Ovary (tissue), 10 donors: ENCODE measurements at regions of chr20 and their contacts with region 1.

Region 1: DNA sequence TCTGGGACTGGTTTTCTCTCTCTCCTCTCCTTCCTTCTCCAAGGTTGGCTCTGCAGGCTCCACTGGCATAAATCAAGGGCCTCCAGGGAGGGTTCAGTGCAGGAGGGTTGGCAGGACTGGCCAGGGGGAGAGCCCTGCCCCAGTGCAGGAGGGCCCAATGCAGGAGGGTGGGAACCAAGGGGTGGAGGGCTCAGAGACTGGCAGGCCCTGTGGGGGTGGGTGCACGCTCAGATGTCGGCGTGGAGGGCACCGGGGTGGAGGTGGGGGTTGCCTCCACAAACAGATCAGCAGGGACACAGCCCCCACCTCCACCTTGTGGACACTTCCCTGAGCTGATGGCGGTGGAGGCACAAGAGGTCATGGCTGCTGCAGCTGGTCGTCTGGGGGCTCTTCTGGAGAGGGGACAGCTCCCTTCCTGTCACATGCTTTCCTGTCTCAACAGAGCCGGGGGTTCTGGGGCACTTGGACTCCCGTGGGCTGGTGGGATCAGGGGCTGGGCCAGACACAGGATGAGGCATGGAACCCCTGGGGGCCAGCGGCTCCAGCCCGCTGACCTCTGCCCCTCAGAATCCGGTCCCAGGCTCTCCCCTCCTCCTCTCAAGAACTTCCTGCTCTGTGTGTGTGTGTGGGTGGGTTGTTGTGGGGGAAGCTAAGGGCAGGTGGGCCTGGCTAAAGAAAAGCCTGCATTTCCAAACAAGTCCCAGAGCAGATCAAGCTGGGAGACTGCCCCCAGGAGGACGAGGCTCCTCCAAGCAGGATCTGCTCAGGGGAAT is 2.7 kb upstream of the ABHD16B start:
- DNase-seq: peak; percentile 63 to 75 (median 70)
- H3K4me3 ChIP-seq: no peak overlapping the region
- H3K27ac ChIP-seq: peak overlapping the region in 1 of 2 donors; percentile 71
- H3K4me1 ChIP-seq: peaks cover 47% of the 10 kb centered on the region
- H3K27me3 ChIP-seq: no peaks in the 10 kb centered on the region
- CTCF ChIP-seq: peak; percentile 12 to 44 (median 35)
- EP300 ChIP-seq: no peak
- POLR2A ChIP-seq: no peak

Region 2: DNA sequence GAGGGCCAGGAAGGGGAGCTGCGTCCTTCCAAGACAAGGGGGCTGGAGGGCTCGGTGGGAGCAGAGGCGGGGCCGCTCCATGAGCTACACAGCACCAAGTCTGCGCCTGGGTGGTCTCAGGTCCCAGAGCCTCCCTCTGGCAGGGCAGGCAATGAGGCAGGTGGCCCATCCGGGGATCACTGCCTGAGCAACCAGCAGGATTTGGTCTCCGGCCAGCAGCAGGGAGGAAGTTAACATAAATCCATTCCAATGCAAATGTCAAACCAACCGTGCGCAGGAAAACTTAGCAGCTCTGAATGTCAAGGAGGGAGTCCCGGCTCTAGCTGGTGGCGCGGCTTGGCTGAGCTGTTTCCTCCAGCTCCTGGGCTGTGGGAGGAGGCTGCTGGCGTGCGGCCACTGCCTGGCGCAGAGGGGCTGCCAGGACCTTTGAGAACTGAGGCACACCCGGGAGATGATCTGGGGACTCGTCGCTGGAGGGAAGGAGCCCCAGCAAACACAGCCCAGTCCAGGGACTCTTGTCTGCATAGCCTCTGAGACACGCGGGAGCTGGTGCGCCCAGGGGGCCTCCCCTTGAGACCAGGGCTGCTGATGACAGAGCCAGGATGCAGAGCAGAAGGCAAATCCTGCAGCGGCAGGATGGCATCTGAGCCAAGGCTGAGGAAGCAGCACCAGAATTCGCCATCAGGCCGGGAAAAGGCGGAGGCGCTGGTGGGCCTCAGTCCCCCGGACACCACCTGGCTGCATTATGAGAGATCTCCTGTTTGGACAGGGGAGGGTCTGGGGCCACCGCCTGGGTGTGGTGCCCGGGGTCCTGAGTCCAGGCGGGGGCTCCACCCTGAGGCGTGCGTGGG is 464.3 kb before region 1 on chr20:
- intact Hi-C with region 1: no loop called
- DNase-seq: no peak
- H3K4me3 ChIP-seq: no peak overlapping the region
- H3K27ac ChIP-seq: no peak overlapping the region
- H3K4me1 ChIP-seq: no peaks in the 10 kb centered on the region
- H3K27me3 ChIP-seq: no peaks in the 10 kb centered on the region
- CTCF ChIP-seq: no peak
- EP300 ChIP-seq: no peak
- POLR2A ChIP-seq: no peak

Region 3: DNA sequence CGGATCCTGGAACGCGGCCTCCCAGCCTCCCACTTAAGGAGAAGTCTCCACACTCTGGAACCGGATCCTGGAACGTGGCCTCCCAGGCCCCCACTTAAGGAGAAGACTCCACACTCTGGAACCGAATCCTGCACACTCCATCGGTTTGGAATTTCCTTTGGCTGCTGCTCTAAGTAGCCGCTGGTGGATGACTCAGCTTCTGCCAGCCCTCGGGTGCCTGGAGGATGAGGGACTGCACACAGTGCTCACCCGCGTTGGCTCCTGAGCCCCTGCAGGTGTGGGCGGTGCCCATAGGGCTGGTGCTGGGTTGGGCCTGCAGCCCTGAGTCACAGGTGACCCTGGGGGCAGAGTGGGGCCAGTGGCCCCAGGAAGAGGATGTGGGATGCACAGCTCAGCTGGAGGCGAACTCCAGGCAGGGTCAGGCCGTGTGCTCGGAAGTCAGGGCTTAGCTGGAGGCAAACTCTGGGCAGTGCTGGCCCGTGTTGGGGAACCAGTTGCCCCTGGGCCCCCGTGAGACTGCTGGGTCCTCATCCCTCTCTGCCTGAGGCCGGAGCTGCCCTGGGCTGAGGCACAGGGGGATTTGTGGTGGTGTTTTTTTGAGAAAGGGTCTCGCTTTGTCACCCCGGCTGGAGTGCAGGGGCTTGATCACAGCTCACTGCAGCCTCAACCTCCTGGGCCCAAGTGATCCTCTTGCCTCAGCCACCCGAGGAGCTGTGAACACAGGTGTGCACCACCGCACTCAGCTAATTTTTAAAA is 176.0 kb before region 1 on chr20:
- intact Hi-C with region 1: no loop called
- DNase-seq: peak in 3 of 5 donors; percentile 44 to 62 (median 51)
- H3K4me3 ChIP-seq: no peak overlapping the region
- H3K27ac ChIP-seq: peak overlapping the region in 1 of 2 donors; percentile 38
- H3K4me1 ChIP-seq: peaks cover 8% of the 10 kb centered on the region
- H3K27me3 ChIP-seq: no peaks in the 10 kb centered on the region
- CTCF ChIP-seq: no peak
- EP300 ChIP-seq: no peak
- POLR2A ChIP-seq: no peak

Region 4: GRCh38 chr20:63775096-63775978 is 83.2 kb before region 1 on chr20:
- intact Hi-C with region 1: loop called in 2 of 4 experiments (anchors 5 kb)
- DNase-seq: peak; percentile 65 to 85 (median 80)
- H3K4me3 ChIP-seq: no peak overlapping the region
- H3K27ac ChIP-seq: peak overlapping the region; percentile 51 to 58
- H3K4me1 ChIP-seq: peaks cover 20% of the 10 kb centered on the region
- H3K27me3 ChIP-seq: no peaks in the 10 kb centered on the region
- CTCF ChIP-seq: peak; percentile 80 to 84 (median 82)
- EP300 ChIP-seq: no peak
- POLR2A ChIP-seq: peak; percentile 10

Region 5: GRCh38 chr20:63782051-63782471 is 76.5 kb before region 1 on chr20:
- intact Hi-C with region 1: loop called in 3 of 4 experiments (anchors 5 kb)
- DNase-seq: no peak
- H3K4me3 ChIP-seq: no peak overlapping the region
- H3K27ac ChIP-seq: no peak overlapping the region
- H3K4me1 ChIP-seq: peaks cover 3% of the 10 kb centered on the region
- H3K27me3 ChIP-seq: no peaks in the 10 kb centered on the region
- CTCF ChIP-seq: no peak
- EP300 ChIP-seq: no peak
- POLR2A ChIP-seq: no peak

Region 6: GRCh38 chr20:63829932-63830835 is 28.4 kb before region 1 on chr20:
- intact Hi-C with region 1: loop called in 2 of 4 experiments (anchors 2 to 5 kb)
- DNase-seq: peak in 4 of 5 donors; percentile 36 to 69 (median 62)
- H3K4me3 ChIP-seq: peak overlapping the region; percentile 61
- H3K27ac ChIP-seq: peak overlapping the region; percentile 66 to 90
- H3K4me1 ChIP-seq: peaks cover 37% of the 10 kb centered on the region
- H3K27me3 ChIP-seq: no peaks in the 10 kb centered on the region
- CTCF ChIP-seq: no peak
- EP300 ChIP-seq: no peak
- POLR2A ChIP-seq: no peak